ENCODE measurements at regions of chr21 and their contacts with region 1.

Region 1: GRCh38 chr21:31659536-31660258 is at the start of gene SOD1:
- DNase-seq: peak; percentile 93
- ATAC-seq: peak; percentile 91 to 96
- H3K4me3 ChIP-seq: peak within 1 kb of the TSS; percentile 75 to 82 (median 80)
- H3K27ac ChIP-seq: peak within 1 kb of the TSS; percentile 85 to 95 (median 90)
- H3K4me1 ChIP-seq: peaks cover 33 to 34% of the 10 kb centered on the region in 2 donors
- H3K27me3 ChIP-seq: no peaks in the 10 kb centered on the region
- CTCF ChIP-seq: peak in 4 of 5 experiments; percentile 13 to 33 (median 23)
- POLR2A ChIP-seq: peak; percentile 87 to 93
- total RNA-seq, gene SOD1: 249 to 453 (median 377) TPM

Region 2: GRCh38 chr21:31592963-31593560 is 66.6 kb before region 1 on chr21:
- in situ Hi-C with region 1: no loop called
- intact Hi-C with region 1: no loop called
- DNase-seq: no peak
- ATAC-seq: no peak
- H3K4me3 ChIP-seq: no peak overlapping the region
- H3K27ac ChIP-seq: no peak overlapping the region
- H3K4me1 ChIP-seq: no peaks in the 10 kb centered on the region
- H3K27me3 ChIP-seq: no peaks in the 10 kb centered on the region
- CTCF ChIP-seq: no peak
- POLR2A ChIP-seq: no peak

Region 3: DNA sequence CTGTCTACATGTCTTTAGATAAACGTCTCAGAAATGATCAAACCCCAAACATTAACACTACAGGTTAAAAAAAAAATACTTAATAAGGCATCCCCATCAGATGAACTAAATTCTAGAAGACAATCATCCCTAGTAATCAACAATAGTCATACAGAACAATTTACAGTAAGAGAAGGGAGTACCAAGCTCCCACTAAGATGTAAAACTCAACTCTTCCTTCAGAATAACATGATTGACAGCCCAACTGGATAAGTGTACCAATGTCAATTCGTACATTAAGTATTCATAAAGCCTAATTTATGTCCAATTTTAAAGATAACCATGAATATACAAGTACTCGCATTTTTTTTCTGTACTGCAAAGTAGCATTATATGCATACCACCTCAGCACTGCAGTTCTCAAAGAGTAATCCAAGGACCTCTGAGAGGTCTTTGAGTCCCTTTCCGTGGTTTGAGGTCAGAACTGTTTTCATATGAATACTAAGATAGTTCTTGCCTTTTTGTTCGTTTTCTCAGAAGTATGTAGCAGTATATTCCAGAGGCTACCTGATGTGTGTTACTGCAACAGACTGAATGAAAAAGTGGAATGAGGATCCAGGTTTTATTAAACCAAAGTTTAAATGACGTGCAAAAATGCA is 65.6 kb after region 1 on chr21:
- in situ Hi-C with region 1: loop called in 2 of 4 experiments (anchors 10 kb)
- intact Hi-C with region 1: no loop called
- DNase-seq: no peak
- ATAC-seq: no peak
- H3K4me3 ChIP-seq: no peak overlapping the region
- H3K27ac ChIP-seq: no peak overlapping the region
- H3K4me1 ChIP-seq: peaks cover 50 to 53% of the 10 kb centered on the region in 2 donors
- H3K27me3 ChIP-seq: no peaks in the 10 kb centered on the region
- CTCF ChIP-seq: no peak
- POLR2A ChIP-seq: no peak

Region 4: GRCh38 chr21:31731802-31732596 is 72.3 kb after region 1 on chr21 and contains the start of gene SCAF4:
- in situ Hi-C with region 1: loop called in 2 of 4 experiments (anchors 10 kb)
- intact Hi-C with region 1: loop called (anchors 1 kb)
- DNase-seq: peak; percentile 83 to 90
- ATAC-seq: peak; percentile 81 to 87
- H3K4me3 ChIP-seq: peak within 1 kb of the TSS; percentile 88 to 94 (median 91)
- H3K27ac ChIP-seq: peak within 1 kb of the TSS; percentile 92 to 99 (median 97)
- H3K4me1 ChIP-seq: peaks cover 39 to 44% of the 10 kb centered on the region in 2 donors
- H3K27me3 ChIP-seq: no peaks in the 10 kb centered on the region
- CTCF ChIP-seq: no peak
- POLR2A ChIP-seq: peak; percentile 90 to 95
- total RNA-seq, gene SCAF4: 8.2 to 11.5 (median 10.0) TPM